ENCODE measurements at regions of chr4 and their contacts with region 1.

Region 1: GRCh38 chr4:70678383-70678999 is 9.8 kb upstream of the UTP3 start:
- DNase-seq: peak; percentile 63
- ATAC-seq: peak; percentile 79
- H3K4me3 ChIP-seq: 0 out of 2 replicates have a peak overlapping the region, but pooled peaks have one; percentile 17
- H3K27ac ChIP-seq: peak overlapping the region; percentile 65
- H3K4me1 ChIP-seq: peaks cover 55% of the 10 kb centered on the region
- H3K27me3 ChIP-seq: no peaks in the 10 kb centered on the region
- CTCF ChIP-seq: no peak
- EP300 ChIP-seq: peak; percentile 87 to 98; a peak in 3 of 4 replicates
- POLR2A ChIP-seq: no peak
- RAD21 ChIP-seq: no peak

Region 2: GRCh38 chr4:70658418-70658817 is 20.1 kb before region 1 on chr4:
- CTCF ChIA-PET with region 1: interaction called, 4 read pairs
- POLR2A ChIA-PET with region 1: interaction called, 3 read pairs
- RAD21 ChIA-PET with region 1: interaction called, 15 read pairs
- SMC1A ChIA-PET with region 1: interaction called, 170 read pairs
- in situ Hi-C with region 1: no loop called
- intact Hi-C with region 1: loop called (anchors 2 kb)
- DNase-seq: no peak
- ATAC-seq: no peak
- H3K4me3 ChIP-seq: no peak overlapping the region
- H3K27ac ChIP-seq: no peak overlapping the region
- H3K4me1 ChIP-seq: no peaks in the 10 kb centered on the region; the same call in 1 of the 2 replicates
- H3K27me3 ChIP-seq: no peaks in the 10 kb centered on the region
- CTCF ChIP-seq: no peak
- EP300 ChIP-seq: no peak
- POLR2A ChIP-seq: no peak
- RAD21 ChIP-seq: no peak

Region 3: DNA sequence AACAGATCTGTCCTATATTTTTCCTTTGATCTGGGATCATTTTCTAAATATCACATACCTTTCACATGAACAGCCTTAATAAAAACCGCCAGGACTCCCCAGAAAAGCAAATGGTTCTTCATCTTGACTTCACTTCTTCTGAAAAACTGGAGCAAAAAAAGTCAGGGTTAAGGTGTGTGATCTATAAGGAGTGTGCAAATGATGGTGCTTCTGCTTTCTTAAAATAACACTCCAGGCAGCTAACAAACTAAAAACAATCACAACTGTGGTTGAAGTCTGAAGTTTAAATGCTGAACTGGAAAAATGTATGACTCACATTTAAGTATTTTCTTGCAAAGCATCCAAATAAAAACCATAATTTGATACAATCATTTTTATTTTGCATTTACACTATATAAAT is 12.1 kb before region 1 on chr4 and contains the start of gene JCHAIN:
- CTCF ChIA-PET with region 1: interaction called, 25 read pairs
- POLR2A ChIA-PET with region 1: interaction called, 28 read pairs
- RAD21 ChIA-PET with region 1: interaction called, 44 read pairs
- SMC1A ChIA-PET with region 1: interaction called, 170 read pairs
- in situ Hi-C with region 1: no loop called
- intact Hi-C with region 1: loop called (anchors 1 kb)
- DNase-seq: no peak
- ATAC-seq: peak; percentile 63
- H3K4me3 ChIP-seq: peak within 1 kb of the TSS; percentile 58
- H3K27ac ChIP-seq: peak within 1 kb of the TSS; percentile 48
- H3K4me1 ChIP-seq: peaks cover 9% of the 10 kb centered on the region
- H3K27me3 ChIP-seq: no peaks in the 10 kb centered on the region
- CTCF ChIP-seq: no peak
- EP300 ChIP-seq: peak in 1 of 2 experiments; percentile 53; a peak in 1 of 4 replicates
- POLR2A ChIP-seq: no peak
- RAD21 ChIP-seq: no peak
- polyA plus RNA-seq, gene JCHAIN: 617 to 1,045 TPM

Region 4: GRCh38 chr4:70704331-70705145 is 26.0 kb after region 1 on chr4:
- CTCF ChIA-PET with region 1: interaction called, 8 read pairs
- POLR2A ChIA-PET with region 1: interaction called, 3 read pairs
- RAD21 ChIA-PET with region 1: interaction called, 4 read pairs
- SMC1A ChIA-PET with region 1: interaction called, 10 read pairs
- in situ Hi-C with region 1: no loop called
- intact Hi-C with region 1: no loop called
- DNase-seq: no peak
- ATAC-seq: peak; percentile 77
- H3K4me3 ChIP-seq: peak overlapping the region; percentile 92
- H3K27ac ChIP-seq: peak overlapping the region; percentile 50
- H3K4me1 ChIP-seq: no peaks in the 10 kb centered on the region; the same call in 1 of the 2 replicates
- H3K27me3 ChIP-seq: no peaks in the 10 kb centered on the region
- CTCF ChIP-seq: peak; percentile 28 to 47 (median 47); a peak in 4 of 6 replicates
- EP300 ChIP-seq: no peak
- POLR2A ChIP-seq: peak; percentile 18; the same call in 1 of the 2 replicates
- RAD21 ChIP-seq: peak; percentile 32; the same call in 1 of the 2 replicates